ENCODE measurements at regions of chr3 and their contacts with region 1.

Region 1: GRCh38 chr3:79773291-79773690 is 5.5 kb upstream of the ROBO1 start:
- DNase-seq: no peak
- H3K4me3 ChIP-seq: no peak overlapping the region
- CTCF ChIP-seq: no peak
- POLR2A ChIP-seq: no peak

Region 2: GRCh38 chr3:79824166-79824565 is 50.9 kb after region 1 on chr3:
- intact Hi-C with region 1: loop called (anchors 2 kb)
- DNase-seq: no peak
- H3K4me3 ChIP-seq: no peak overlapping the region
- CTCF ChIP-seq: no peak
- POLR2A ChIP-seq: no peak

Region 3: DNA sequence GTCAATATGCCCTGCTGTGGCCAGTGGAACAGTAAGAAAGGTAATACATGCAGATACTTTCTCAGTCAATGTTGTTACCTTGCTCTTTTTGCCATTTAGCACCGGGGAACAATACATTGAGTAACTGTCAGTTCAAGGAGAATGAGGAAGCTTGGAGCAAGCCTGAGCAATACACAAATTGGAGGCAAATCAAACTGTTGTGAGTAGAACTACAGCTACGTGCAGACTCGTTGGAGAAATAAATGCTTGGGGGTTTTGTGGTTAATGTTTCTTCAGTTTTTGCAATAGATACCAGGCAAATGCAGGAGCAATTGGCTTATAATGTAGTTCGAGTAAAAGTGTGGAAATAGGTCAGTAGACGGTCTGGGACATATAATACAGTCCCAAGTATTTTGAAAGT is 581.9 kb after region 1 on chr3:
- intact Hi-C with region 1: no loop called
- DNase-seq: no peak
- H3K4me3 ChIP-seq: no peak overlapping the region
- CTCF ChIP-seq: no peak
- POLR2A ChIP-seq: no peak

Region 4: GRCh38 chr3:80914854-80915253 is 1141.6 kb after region 1 on chr3:
- intact Hi-C with region 1: no loop called
- DNase-seq: no peak
- H3K4me3 ChIP-seq: no peak overlapping the region
- CTCF ChIP-seq: no peak
- POLR2A ChIP-seq: no peak